Pancreas (tissue), 10 donors: ENCODE measurements at regions of chr15 and their contacts with region 1.

Region 1: DNA sequence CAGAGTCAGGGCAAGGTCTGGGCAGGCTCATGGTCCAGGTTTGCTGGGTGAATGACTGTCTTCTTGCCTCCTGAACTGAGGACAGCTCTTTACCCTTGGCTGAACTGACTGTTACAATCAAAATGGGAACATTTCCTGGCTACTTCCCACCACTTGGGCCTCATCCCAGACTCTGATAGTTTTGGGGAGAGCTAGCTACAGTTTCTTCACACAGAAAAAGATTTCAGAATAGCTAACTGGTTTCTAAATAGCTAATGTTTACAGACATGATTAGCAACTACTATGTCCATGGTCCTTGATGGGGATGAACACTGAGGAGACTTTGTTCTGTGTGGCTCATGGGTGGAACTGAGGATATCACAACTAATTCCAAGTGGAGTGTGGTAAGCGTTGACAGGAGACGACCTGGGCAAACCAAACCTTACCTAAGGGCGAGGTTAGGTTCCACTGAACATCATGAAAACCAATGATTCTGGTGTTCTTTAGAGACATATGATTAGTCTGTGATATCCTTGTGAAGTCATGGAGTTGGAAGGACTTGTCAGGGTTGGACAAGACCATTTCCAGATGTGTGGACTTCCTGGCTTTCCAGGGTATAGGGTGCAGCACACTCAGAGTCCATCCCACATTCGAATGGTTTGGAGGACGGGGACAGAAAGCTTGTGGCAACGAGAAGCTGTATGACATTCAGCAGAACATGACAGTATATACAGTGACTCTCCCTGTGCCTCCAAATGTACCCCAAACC is 7.3 kb downstream of the ALPK3 start:
- DNase-seq: no peak
- ATAC-seq: peak in 2 of 4 donors; percentile 2 to 4
- H3K4me3 ChIP-seq: no peak overlapping the region
- H3K27ac ChIP-seq: no peak overlapping the region
- H3K4me1 ChIP-seq: peaks cover 3 to 10% (median 5%) of the 10 kb centered on the region in 3 donors
- H3K27me3 ChIP-seq: no peaks in the 10 kb centered on the region
- CTCF ChIP-seq: no peak

Region 2: GRCh38 chr15:84716036-84716799 is 108.2 kb before region 1 on chr15 and contains the start of gene SEC11A:
- intact Hi-C with region 1: no loop called
- DNase-seq: peak; percentile 92 to 97 (median 94)
- ATAC-seq: peak; percentile 97 to 99 (median 98)
- H3K4me3 ChIP-seq: peak within 1 kb of the TSS; percentile 71 to 89 (median 80)
- H3K27ac ChIP-seq: peak within 1 kb of the TSS; percentile 80 to 91 (median 86)
- H3K4me1 ChIP-seq: peaks cover 10 to 14% (median 14%) of the 10 kb centered on the region in 3 donors
- H3K27me3 ChIP-seq: no peaks in the 10 kb centered on the region
- CTCF ChIP-seq: no peak
- total RNA-seq, gene SEC11A: 43.7 to 77.5 (median 67.8) TPM

Region 3: GRCh38 chr15:84883916-84884768 is 59.7 kb after region 1 on chr15 and contains the start of gene SLC28A1:
- intact Hi-C with region 1: loop called in 1 of 3 experiments (anchors 5 kb)
- DNase-seq: peak in 1 of 6 donors; percentile 41
- ATAC-seq: peak; percentile 14 to 63 (median 31)
- H3K4me3 ChIP-seq: no peak within 1 kb of the TSS
- H3K27ac ChIP-seq: peak within 1 kb of the TSS; percentile 35 to 80 (median 60)
- H3K4me1 ChIP-seq: peaks cover 0 to 3% (median 0%) of the 10 kb centered on the region in 3 donors
- H3K27me3 ChIP-seq: no peaks in the 10 kb centered on the region
- CTCF ChIP-seq: no peak
- total RNA-seq, gene SLC28A1: 0.08 to 0.21 (median 0.19) TPM in 3 of 6 donors, not detected in the others